ENCODE measurements at regions of chr17 and their contacts with region 1.

Region 1: GRCh38 chr17:57671667-57672632 is 73.1 kb downstream of the CCDC182 start:
- DNase-seq: peak; percentile 80
- H3K4me3 Mint-ChIP-seq: no peak overlapping the region
- H3K27ac Mint-ChIP-seq: peak overlapping the region; percentile 57
- H3K4me1 Mint-ChIP-seq: peaks cover 30% of the 10 kb centered on the region
- H3K27me3 Mint-ChIP-seq: no peaks in the 10 kb centered on the region

Region 2: DNA sequence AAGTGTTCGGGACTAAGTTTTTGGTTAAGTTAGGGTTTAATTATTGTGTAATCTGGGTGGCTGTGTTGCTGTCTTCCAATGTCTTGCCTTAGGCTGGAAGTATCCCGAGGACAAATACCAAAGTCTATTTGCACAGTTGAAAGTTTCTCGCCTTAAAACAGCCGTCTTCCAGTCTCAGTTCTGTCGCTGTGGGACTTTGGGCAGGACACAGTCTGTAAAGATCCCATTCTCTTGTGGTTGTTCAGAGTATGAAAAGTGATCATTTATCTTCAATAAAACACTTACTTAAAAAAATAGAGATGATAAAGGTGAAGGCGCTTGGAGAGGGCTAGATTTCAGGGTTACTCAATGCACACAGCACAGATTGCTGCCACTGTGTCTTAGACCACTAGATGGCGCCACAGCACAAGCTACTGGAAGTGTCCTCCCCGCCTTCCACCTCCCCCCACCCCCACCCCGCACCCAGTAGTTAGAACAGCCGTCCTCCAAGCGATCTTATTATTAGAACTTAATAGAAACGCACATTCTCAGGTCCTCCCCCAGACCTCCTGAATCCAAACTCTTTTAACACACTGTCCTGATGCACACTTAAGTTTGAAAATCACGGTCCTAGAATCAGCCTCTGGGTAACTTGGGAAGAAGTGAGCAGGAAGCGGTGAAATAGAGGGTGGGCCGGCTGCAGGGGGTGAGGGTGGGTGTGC is 541.0 kb before region 1 on chr17:
- CTCF ChIA-PET with region 1: interaction called, 13 read pairs
- POLR2A ChIA-PET with region 1: no interaction called
- intact Hi-C with region 1: no loop called
- DNase-seq: peak; percentile 86
- H3K4me3 Mint-ChIP-seq: no peak overlapping the region
- H3K27ac Mint-ChIP-seq: no peak overlapping the region
- H3K4me1 Mint-ChIP-seq: peaks cover 4% of the 10 kb centered on the region
- H3K27me3 Mint-ChIP-seq: no peaks in the 10 kb centered on the region

Region 3: DNA sequence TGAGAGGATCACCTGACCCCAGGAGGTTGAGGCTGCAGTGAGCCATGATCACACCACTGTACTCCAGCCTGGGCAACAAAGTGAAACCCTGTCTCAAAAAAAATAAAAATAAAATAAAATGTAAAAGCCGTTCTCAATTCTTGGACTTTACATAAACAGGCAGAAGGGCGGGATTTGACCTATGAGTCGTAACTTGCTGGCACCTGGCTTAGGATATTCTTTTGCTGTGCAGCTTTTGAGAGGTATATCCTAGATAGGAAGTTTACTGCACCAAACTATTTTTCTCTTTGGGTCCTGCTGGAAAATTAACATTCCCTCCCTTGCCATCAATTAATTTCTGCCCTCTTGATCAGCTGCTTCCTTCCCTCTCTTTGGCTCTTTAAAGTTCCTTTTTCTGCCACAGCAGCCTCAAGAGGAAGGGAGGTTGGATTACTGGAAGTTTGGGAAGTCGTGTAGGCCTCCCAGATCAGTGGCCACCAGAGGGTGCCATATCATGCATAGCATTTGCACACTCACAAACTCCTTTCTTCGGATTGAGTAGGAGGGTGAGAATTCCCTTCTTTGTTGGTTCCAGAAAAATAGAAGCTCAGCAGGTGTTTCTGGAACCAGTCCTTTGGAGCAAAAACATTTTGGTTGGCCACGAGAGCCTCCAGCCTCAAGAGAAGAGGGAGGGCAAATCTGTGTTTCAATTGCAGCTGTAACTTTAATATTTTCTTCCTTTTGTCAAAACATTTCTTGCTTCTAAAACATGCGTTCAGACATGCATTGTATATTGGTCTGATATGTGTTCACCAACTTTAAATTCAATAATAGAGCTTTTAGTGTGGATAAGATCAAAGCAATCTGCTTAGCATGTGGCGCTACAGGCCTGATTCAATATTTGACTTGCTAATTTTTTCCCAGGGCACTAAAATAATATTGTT is 74.2 kb before region 1 on chr17:
- CTCF ChIA-PET with region 1: interaction called, 144 read pairs
- POLR2A ChIA-PET with region 1: no interaction called
- intact Hi-C with region 1: loop called (anchors 1 kb)
- DNase-seq: peak; percentile 51
- H3K4me3 Mint-ChIP-seq: no peak overlapping the region
- H3K27ac Mint-ChIP-seq: peak overlapping the region; percentile 90
- H3K4me1 Mint-ChIP-seq: peaks cover 52% of the 10 kb centered on the region
- H3K27me3 Mint-ChIP-seq: no peaks in the 10 kb centered on the region

Region 4: GRCh38 chr17:57649731-57650484 is 22.0 kb before region 1 on chr17:
- CTCF ChIA-PET with region 1: interaction called, 10 read pairs
- POLR2A ChIA-PET with region 1: interaction called, 3 read pairs
- intact Hi-C with region 1: loop called (anchors 2 kb)
- DNase-seq: no peak
- H3K4me3 Mint-ChIP-seq: no peak overlapping the region
- H3K27ac Mint-ChIP-seq: no peak overlapping the region
- H3K4me1 Mint-ChIP-seq: peaks cover 9% of the 10 kb centered on the region
- H3K27me3 Mint-ChIP-seq: no peaks in the 10 kb centered on the region

Region 5: DNA sequence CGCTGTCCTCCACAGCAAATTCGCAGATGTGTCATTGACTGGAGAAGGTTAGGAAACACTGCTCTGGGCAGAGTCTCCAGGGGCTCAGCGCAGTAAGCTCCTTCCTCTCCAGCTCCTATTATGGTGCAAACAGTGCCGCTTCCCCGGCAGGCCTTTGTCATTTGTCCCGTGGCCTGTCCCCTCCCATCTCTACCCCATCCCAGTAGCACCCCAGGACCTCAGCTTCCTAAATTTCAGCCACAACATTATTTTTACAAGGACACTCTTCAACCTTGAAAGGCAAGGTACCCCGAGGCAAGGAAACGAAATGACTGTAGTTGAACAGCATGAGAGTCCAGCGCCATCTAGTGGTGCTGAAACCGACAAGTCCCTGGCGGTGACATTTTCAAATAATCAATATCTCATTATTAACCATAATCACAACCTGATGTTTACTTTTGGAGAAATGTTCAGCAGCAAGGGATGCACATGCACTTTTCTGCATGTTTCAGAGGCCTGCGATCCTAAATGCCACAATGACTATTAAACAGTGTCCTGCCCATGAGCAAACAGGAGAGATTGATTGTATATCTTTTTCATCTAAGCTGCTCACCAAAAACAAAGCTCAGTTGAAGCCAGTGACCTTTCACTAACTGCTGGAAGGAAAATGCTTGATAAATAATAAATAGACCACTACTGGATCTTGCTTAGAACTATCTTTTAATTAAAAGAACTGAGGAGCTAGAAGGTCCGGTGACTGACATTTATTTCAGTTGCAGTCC is 161.4 kb after region 1 on chr17:
- CTCF ChIA-PET with region 1: interaction called, 15 read pairs
- POLR2A ChIA-PET with region 1: no interaction called
- intact Hi-C with region 1: no loop called
- DNase-seq: peak; percentile 73
- H3K4me3 Mint-ChIP-seq: no peak overlapping the region
- H3K27ac Mint-ChIP-seq: no peak overlapping the region
- H3K4me1 Mint-ChIP-seq: peaks cover 6% of the 10 kb centered on the region
- H3K27me3 Mint-ChIP-seq: no peaks in the 10 kb centered on the region

Measured in activated CD4-positive, alpha-beta memory T cell treated with anti-CD3 and anti-CD28 coated beads for 36 hours (primary cell).